Heart left ventricle (tissue), 16 donors: ENCODE measurements at regions of chr20 and their contacts with region 1.

Region 1: DNA sequence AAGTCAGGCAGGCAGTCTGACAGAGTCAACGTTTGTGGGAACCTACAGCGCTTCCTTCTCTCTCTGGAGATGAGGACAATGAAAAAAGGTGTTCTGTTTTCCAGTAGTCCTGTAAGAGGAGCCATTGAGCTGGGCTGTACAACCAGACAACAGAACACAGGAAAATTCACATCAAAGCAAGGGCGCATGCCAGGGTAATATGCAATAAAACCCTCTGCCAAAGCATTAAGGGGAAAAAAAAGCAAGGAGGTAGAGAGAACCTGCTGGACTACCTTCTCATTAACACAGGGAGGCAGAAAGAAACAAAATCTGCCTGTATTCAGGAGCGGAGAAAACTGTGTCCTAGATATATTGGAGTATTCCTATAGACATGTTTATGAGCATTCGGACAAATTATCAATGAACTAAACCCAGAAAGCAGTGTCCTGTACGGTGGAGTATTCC is 1.3 kb downstream of the RNF24 start:
- DNase-seq: peak in 1 of 5 donors; percentile 33
- ATAC-seq: peak in 3 of 4 donors; percentile 47 to 68 (median 48)
- H3K4me3 ChIP-seq: peak overlapping the region in 9 of 12 donors; percentile 80 to 91 (median 88)
- H3K27ac ChIP-seq: peak overlapping the region in 8 of 12 donors; percentile 3 to 90 (median 62)
- H3K4me1 ChIP-seq: peaks cover 0 to 54% (median 11%) of the 10 kb centered on the region in 12 donors
- H3K27me3 ChIP-seq: no peaks in the 10 kb centered on the region
- CTCF ChIP-seq: peak; percentile 33 to 73 (median 54)
- POLR2A ChIP-seq: no peak

Region 2: GRCh38 chr20:3786665-3787323 is 227.3 kb before region 1 on chr20 and contains the start of gene CENPB:
- intact Hi-C with region 1: loop called in 1 of 10 experiments (anchors 5 kb)
- DNase-seq: peak; percentile 88 to 96 (median 93)
- ATAC-seq: peak; percentile 81 to 93 (median 92)
- H3K4me3 ChIP-seq: peak within 1 kb of the TSS; percentile 40 to 81 (median 68)
- H3K27ac ChIP-seq: peak within 1 kb of the TSS; percentile 74 to 92 (median 84)
- H3K4me1 ChIP-seq: peaks cover 4 to 38% (median 30%) of the 10 kb centered on the region in 12 donors
- H3K27me3 ChIP-seq: no peaks in the 10 kb centered on the region
- CTCF ChIP-seq: peak; percentile 64 to 95 (median 86)
- POLR2A ChIP-seq: no peak
- total RNA-seq, gene CENPB: 56.2 to 122 (median 74.0) TPM

Region 3: GRCh38 chr20:4053071-4053919 is 39.2 kb after region 1 on chr20:
- intact Hi-C with region 1: loop called in 1 of 10 experiments (anchors 5 kb)
- DNase-seq: no peak
- ATAC-seq: no peak
- H3K4me3 ChIP-seq: no peak overlapping the region
- H3K27ac ChIP-seq: peak overlapping the region in 3 of 12 donors; percentile 37 to 74 (median 53)
- H3K4me1 ChIP-seq: peaks cover 0 to 24% (median 13%) of the 10 kb centered on the region in 12 donors
- H3K27me3 ChIP-seq: no peaks in the 10 kb centered on the region
- CTCF ChIP-seq: no peak
- POLR2A ChIP-seq: no peak

Region 4: GRCh38 chr20:4069751-4070150 is 55.7 kb after region 1 on chr20:
- intact Hi-C with region 1: loop called in 7 of 10 experiments (anchors 2 to 5 kb)
- DNase-seq: peak in 1 of 5 donors; percentile 15
- ATAC-seq: peak in 3 of 4 donors; percentile 31 to 64 (median 56)
- H3K4me3 ChIP-seq: no peak overlapping the region
- H3K27ac ChIP-seq: peak overlapping the region in 3 of 12 donors; percentile 9 to 44 (median 42)
- H3K4me1 ChIP-seq: peaks cover 0 to 51% (median 18%) of the 10 kb centered on the region in 12 donors
- H3K27me3 ChIP-seq: no peaks in the 10 kb centered on the region
- CTCF ChIP-seq: no peak
- POLR2A ChIP-seq: no peak

Region 5: DNA sequence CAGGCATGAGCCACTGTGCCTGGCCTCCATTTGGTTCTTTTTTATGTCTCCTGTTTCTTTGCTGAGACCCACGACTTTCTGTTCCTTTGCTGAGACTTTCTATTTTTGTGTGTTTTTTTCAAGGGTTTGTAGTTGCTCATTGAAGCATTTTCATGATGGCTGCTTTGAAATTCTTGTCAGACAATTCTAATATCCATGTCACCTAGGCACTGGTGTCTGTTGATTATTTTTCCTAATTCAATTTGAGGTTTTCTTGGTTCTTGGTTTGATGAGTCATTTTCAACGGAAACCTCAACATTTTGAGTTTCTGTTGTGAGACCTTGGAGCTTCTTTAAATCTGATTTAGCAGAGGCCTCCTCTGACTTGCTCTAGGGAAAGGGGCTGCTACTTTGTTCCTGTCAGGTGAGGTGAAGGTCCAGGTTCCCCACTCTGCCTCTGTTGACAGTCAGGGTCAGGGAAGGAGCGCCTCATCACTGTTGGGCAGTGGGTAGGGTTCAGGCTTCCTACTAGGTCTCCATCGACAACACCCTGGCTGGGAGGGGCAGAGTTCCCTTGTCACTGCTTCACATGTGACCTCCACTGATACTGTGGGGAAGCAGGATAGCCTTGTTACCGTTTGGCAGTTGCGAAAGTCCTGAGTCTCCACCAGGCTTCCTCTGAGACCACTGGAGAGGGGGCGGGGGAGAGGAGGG is 68.5 kb after region 1 on chr20:
- intact Hi-C with region 1: loop called in 9 of 10 experiments (anchors 1 to 5 kb)
- DNase-seq: peak in 4 of 5 donors; percentile 49 to 61 (median 51)
- ATAC-seq: peak in 3 of 4 donors; percentile 37 to 54 (median 50)
- H3K4me3 ChIP-seq: no peak overlapping the region
- H3K27ac ChIP-seq: peak overlapping the region in 4 of 12 donors; percentile 54 to 80 (median 64)
- H3K4me1 ChIP-seq: peaks cover 0 to 42% (median 8%) of the 10 kb centered on the region in 12 donors
- H3K27me3 ChIP-seq: no peaks in the 10 kb centered on the region
- CTCF ChIP-seq: no peak
- POLR2A ChIP-seq: no peak